CD8-positive, alpha-beta T cell (primary cell): ENCODE measurements at regions of chr1 and their contacts with region 1.

Region 1: DNA sequence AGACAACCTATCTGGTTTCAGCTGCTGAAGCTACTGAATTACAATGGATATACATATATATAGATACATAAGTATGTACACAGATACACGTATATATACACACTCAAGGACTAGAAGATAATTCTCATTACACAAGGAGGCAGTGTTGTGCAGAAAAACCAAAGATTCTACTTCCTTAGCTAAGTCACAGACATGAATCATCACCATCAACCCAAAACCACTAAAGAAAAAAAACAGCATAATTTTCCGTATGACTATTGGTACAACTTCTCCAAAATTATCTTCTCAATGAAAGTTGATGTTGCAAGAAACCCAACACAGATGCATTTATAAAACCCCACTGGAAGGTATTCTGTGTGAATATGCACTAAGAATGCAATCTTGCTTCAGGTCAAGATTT is 36.8 kb upstream of the RPF1 start:
- DNase-seq: peak in 3 of 9 experiments; percentile 10 to 90 (median 83)
- ATAC-seq: peak; percentile 96
- H3K4me3 ChIP-seq: no peak overlapping the region
- H3K4me3 Mint-ChIP-seq: no peak overlapping the region
- H3K27ac ChIP-seq: no peak overlapping the region
- H3K27ac Mint-ChIP-seq: no peak overlapping the region
- H3K4me1 ChIP-seq: peaks cover 20% of the 10 kb centered on the region
- H3K4me1 Mint-ChIP-seq: peaks cover 15% of the 10 kb centered on the region
- H3K27me3 ChIP-seq: no peaks in the 10 kb centered on the region
- H3K27me3 Mint-ChIP-seq: peaks cover 4% of the 10 kb centered on the region
- CTCF ChIP-seq: peak; percentile 53

Region 2: DNA sequence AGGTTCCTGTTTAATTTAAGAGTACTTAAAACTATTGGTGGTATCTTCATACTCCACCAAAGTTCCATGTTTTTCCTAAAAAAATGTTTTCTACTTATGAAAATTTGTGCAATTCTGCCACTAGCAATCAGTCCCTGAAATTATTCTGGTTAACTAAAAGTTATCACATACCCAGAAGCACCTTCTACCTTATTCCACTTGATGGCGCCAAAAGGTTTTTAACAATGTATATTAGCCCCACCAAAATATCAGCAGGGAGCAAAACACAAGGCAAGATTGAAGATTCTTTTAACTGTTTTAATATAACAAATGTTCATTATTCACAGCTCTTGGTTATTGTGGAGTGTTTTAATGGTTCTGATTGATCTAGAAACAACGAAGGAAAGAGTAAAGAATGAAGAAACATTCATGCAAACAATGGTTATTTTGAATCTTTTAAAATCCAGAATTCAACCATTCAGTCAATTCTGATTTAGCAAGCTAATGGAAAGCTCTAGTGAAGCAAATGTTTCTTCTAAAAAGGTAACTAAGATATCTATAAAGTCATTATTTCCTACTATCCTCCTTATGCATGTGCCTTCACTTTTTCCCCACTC is 510.5 kb before region 1 on chr1:
- CTCF ChIA-PET with region 1: interaction called, 8 read pairs
- POLR2A ChIA-PET with region 1: no interaction called
- intact Hi-C with region 1: loop called in 1 of 2 experiments (anchors 5 kb)
- DNase-seq: peak in 3 of 9 experiments; percentile 11 to 69 (median 58)
- ATAC-seq: peak; percentile 69
- H3K4me3 ChIP-seq: no peak overlapping the region
- H3K4me3 Mint-ChIP-seq: no peak overlapping the region
- H3K27ac ChIP-seq: no peak overlapping the region
- H3K27ac Mint-ChIP-seq: no peak overlapping the region
- H3K4me1 ChIP-seq: no peaks in the 10 kb centered on the region
- H3K4me1 Mint-ChIP-seq: no peaks in the 10 kb centered on the region
- H3K27me3 ChIP-seq: no peaks in the 10 kb centered on the region
- H3K27me3 Mint-ChIP-seq: peaks cover 7% of the 10 kb centered on the region
- CTCF ChIP-seq: peak; percentile 86

Region 3: DNA sequence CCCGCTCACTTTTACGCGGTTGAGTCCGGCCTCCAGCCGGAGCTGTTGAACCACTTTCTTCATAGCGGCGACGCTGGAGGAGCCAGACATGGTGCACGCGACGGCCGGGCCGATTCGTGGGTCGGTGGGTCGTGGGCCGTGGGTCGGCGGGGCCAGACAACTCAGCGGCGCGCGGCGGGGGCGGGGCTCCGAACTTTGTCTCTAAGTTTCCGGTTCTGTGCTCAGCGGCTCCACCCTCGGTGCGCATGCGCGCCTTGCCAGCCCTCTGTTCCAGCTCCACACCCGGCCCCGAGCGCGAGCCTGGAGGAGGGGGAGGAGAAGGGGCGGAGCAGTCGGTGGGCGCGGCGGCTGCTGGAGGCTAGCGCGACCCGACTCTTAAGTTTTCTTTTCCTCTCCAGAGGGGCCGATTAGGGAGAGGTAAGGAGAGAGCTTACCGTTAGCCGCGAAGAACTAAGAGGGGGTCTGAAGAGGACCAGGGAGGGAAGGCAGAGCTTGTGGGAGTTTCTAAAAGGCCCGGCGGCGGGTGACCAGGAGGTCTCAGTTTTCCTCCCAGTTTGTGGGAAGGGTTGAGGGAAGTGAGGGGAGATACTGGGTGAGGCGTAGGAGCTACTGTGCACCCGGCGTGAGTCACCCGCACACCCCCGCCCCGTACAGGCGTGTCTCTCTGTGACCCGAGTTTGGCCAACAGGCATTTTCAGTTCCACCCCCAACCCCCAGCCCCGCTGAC is 63.9 kb after region 1 on chr1 and contains the starts of genes GNG5 and SPATA1:
- CTCF ChIA-PET with region 1: interaction called, 7 read pairs
- POLR2A ChIA-PET with region 1: interaction called, 8 read pairs
- intact Hi-C with region 1: loop called in 1 of 2 experiments (anchors 1 kb)
- DNase-seq: peak; percentile 91 to 98 (median 98)
- ATAC-seq: peak; percentile 89
- H3K4me3 ChIP-seq: peak within 1 kb of the TSS; percentile 87 to 95
- H3K4me3 Mint-ChIP-seq: peak within 1 kb of the TSS; percentile 94
- H3K27ac ChIP-seq: peak within 1 kb of the TSS; percentile 75 to 88
- H3K27ac Mint-ChIP-seq: peak within 1 kb of the TSS; percentile 96
- H3K4me1 ChIP-seq: peaks cover 40% of the 10 kb centered on the region
- H3K4me1 Mint-ChIP-seq: peaks cover 45% of the 10 kb centered on the region
- H3K27me3 ChIP-seq: no peaks in the 10 kb centered on the region
- H3K27me3 Mint-ChIP-seq: no peaks in the 10 kb centered on the region
- CTCF ChIP-seq: no peak
- total RNA-seq, gene GNG5: 19.5 TPM
- total RNA-seq, gene SPATA1: 0.52 to 0.94 TPM

Region 4: DNA sequence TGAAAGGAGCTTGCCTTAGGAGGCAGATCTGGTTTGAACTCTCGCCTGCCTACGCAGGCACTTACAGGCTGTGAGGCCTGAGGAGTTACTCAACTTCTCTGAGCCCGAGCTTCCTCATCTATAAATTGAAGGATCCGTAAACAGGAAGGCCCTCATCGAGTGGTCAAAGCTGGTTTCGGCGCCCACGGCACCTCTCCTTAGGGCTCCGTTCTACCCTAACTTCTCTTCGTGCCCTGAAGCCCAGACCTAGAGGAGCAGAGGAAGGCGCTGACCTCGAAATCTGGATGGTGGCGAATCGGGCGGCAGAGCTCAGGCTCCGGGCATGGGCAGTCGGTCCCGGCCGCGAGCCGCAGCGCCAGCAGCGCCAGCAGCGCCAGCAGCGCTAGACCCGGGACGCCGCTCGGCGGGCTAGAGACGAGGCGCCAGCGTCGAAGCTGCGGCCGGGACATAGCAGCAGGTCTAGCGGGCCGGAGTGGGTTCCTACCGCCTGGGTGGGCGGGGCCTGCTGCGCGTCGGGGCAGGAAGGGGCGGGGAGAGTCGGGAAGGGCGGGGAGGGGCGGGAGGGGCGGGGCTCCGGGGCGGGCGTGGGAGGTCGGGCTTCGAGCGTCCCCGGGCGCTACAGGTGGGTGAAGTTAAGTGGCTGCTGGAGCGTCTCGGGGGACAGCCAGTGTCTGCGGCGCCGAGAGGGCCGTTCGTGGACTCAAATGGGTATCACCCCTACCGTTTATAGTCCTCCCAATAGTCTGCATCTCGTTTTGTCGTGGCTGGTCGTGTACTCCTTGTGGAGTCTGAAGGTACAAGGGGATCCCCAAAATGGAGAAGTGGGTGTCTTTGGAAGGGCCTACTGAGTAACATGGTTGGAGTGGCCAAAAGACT is 131.9 kb after region 1 on chr1 and contains the start of gene CTBS:
- CTCF ChIA-PET with region 1: interaction called, 8 read pairs
- POLR2A ChIA-PET with region 1: interaction called, 7 read pairs
- intact Hi-C with region 1: loop called (anchors 1 to 2 kb)
- DNase-seq: peak; percentile 67 to 93 (median 85)
- ATAC-seq: peak; percentile 91
- H3K4me3 ChIP-seq: peak within 1 kb of the TSS; percentile 81 to 92
- H3K4me3 Mint-ChIP-seq: peak within 1 kb of the TSS; percentile 96
- H3K27ac ChIP-seq: peak within 1 kb of the TSS; percentile 94 to 96
- H3K27ac Mint-ChIP-seq: peak within 1 kb of the TSS; percentile 99
- H3K4me1 ChIP-seq: peaks cover 20% of the 10 kb centered on the region
- H3K4me1 Mint-ChIP-seq: peaks cover 42% of the 10 kb centered on the region
- H3K27me3 ChIP-seq: no peaks in the 10 kb centered on the region
- H3K27me3 Mint-ChIP-seq: no peaks in the 10 kb centered on the region
- CTCF ChIP-seq: no peak
- total RNA-seq, gene CTBS: 17.3 to 19.7 TPM

Region 5: DNA sequence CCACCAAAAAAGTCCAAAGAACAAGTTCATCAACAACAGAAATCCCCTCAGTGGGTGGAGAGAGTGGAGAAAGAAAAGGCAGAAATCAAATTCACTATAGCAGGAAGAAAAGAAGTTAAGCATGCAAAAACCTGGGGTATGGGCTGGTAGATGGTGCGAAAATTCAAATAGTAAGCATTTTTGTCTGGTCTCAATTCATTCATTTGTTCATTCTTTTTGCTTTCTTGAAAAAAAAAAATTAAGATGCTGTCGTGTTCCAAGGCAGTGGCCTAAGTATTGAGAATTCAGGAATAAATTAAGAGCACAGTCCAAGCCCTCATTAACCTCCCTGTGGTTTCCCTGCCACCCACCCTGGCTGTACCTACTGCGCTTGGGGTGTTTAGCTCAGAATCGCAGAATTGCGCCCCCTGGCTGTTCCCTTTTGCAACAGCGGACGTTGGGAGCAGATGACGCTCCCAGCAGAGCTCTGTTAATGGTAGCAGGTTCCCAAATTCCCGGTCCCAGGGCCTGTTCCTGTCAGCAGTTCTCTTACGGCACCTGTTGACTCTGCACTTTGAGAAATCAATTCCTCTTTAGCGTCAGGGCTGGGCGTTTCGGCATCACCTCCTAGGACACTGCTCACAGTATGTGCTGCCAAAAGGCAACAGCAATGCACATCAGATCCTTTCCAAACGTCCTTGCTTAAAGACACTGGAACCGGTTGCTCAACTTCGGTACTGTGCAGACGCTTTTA is 282.0 kb after region 1 on chr1:
- CTCF ChIA-PET with region 1: interaction called, 6 read pairs
- POLR2A ChIA-PET with region 1: no interaction called
- intact Hi-C with region 1: loop called in 1 of 2 experiments (anchors 1 kb)
- DNase-seq: peak; percentile 10 to 67 (median 57)
- ATAC-seq: peak; percentile 67
- H3K4me3 ChIP-seq: no peak overlapping the region
- H3K4me3 Mint-ChIP-seq: no peak overlapping the region
- H3K27ac ChIP-seq: no peak overlapping the region
- H3K27ac Mint-ChIP-seq: no peak overlapping the region
- H3K4me1 ChIP-seq: no peaks in the 10 kb centered on the region
- H3K4me1 Mint-ChIP-seq: no peaks in the 10 kb centered on the region
- H3K27me3 ChIP-seq: no peaks in the 10 kb centered on the region
- H3K27me3 Mint-ChIP-seq: peaks cover 2% of the 10 kb centered on the region
- CTCF ChIP-seq: peak; percentile 49

Region 6: DNA sequence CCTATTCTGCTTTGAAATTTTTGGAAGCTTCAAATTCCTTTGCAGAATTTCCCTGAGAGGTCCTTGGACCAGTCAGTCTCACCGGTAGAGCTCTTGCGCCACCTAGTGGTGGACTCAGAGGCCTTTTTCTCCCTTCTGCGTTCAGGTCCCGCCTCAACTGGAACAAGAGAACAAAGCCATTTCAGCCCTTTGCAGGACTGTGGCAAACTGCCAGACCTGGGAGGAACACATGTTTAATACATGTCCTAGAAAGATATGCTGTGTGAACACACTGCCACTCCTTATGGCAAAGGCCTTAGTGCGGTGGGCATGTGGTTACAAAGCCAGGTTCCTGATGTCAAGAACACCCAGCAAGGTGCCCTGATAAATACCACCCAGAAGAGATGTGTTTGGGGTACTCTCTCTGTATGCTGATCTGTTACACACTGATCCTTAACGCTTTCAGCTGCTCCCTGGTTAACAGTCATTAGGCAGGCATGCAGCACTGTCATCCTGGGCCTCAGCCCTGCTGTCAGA is 330.2 kb after region 1 on chr1:
- CTCF ChIA-PET with region 1: interaction called, 9 read pairs
- POLR2A ChIA-PET with region 1: no interaction called
- intact Hi-C with region 1: loop called (anchors 1 kb)
- DNase-seq: peak; percentile 25 to 88 (median 66)
- ATAC-seq: peak; percentile 73
- H3K4me3 ChIP-seq: no peak overlapping the region
- H3K4me3 Mint-ChIP-seq: no peak overlapping the region
- H3K27ac ChIP-seq: no peak overlapping the region
- H3K27ac Mint-ChIP-seq: no peak overlapping the region
- H3K4me1 ChIP-seq: no peaks in the 10 kb centered on the region
- H3K4me1 Mint-ChIP-seq: peaks cover 3% of the 10 kb centered on the region
- H3K27me3 ChIP-seq: no peaks in the 10 kb centered on the region
- H3K27me3 Mint-ChIP-seq: peaks cover 3% of the 10 kb centered on the region
- CTCF ChIP-seq: peak; percentile 95